ENCODE measurements at regions of chr3 and their contacts with region 1.

Region 1: DNA sequence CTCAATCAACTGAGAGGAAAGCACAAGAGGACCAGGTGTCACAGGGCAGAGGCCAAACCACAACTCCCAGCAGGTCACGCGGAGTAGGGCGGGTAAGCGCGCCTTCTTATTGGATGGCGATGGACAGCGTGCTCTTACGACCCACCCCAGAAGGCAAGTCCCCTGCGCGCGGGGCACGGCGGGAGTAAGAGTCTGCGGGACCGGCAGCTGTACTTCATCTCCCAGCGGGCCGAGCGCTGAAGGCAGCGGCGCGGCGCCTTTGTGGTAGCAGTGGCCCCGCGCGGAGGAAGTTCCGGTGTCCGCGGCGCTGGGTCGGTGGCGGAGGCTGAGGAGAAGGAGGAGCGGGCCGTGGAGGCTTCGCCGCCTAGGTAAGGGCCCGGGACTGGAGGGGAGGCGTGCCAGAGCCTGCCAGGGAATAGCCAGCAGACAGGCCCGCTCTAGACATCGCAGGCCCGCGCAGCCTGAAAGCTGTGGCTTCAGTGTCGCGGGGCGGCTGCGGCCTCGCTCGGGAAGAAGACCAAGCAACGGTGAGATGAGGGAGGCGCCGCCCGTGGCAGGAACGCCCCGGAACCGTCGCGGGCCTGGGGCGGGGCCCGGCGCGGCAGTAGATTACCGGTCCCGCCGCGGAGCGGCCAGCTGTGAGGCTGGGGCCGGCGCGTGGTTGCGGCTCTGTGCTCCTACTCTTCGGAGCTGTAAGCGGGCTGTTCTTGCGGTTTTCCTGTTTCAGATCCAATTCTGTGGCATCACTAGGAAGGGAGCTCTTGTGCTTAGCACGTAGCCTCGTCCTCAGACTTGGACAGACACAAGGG is at the start of gene RBM6:
- DNase-seq: peak; percentile 86 to 98 (median 92)
- ATAC-seq: peak; percentile 97
- H3K4me3 ChIP-seq: peak within 1 kb of the TSS; percentile 88
- H3K4me3 Mint-ChIP-seq: peak within 1 kb of the TSS; percentile 95
- H3K27ac ChIP-seq: peak within 1 kb of the TSS; percentile 96 to 98
- H3K27ac Mint-ChIP-seq: peak within 1 kb of the TSS; percentile 97
- H3K4me1 ChIP-seq: peaks cover 26% of the 10 kb centered on the region
- H3K4me1 Mint-ChIP-seq: peaks cover 34% of the 10 kb centered on the region
- H3K27me3 ChIP-seq: no peaks in the 10 kb centered on the region
- H3K27me3 Mint-ChIP-seq: no peaks in the 10 kb centered on the region
- CTCF ChIP-seq: no peak
- total RNA-seq, gene RBM6: 99.3 to 106 TPM

Region 2: DNA sequence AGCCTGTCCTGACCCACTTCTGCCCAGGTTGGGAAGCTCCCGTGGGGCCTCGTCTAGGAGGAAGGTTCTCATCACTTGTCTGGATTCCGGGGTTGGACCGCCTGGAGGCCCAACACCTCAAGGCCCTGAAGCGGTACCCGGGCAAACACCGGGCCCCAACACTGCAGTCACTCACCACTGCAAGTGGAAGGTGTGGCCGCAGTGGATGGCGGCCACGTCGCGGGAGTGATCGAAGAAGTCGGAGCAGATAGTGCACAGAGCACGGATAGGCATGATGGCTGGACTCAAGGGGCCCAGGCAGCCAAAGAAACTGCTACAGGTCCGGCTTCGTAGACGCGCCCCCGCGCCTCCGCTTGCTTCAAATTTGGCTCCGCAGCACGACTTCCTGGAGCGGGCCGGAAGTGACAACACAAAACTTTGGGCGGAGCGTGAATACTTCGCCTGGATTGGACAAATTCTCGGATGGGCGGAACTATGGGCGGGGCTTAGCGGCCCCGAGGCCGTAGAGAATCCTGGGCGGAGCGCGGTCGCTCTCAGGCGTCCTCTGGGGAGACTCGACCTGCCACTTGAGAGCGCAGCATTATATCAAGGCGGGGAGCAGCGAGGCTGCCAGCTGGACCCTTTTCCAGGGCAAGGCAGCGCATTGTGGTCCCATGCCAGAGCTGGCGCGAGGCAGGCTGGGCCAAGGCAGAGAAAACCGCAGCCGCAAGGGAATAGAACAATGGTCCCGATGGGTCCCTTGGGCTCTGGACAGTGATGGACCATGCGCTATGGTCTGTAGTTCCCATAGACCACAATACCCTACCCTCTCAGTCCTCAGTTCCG is 83.7 kb before region 1 on chr3 and contains the start of gene TRAIP:
- CTCF ChIA-PET with region 1: no interaction called
- POLR2A ChIA-PET with region 1: interaction called, 4 read pairs
- intact Hi-C with region 1: loop called in 1 of 2 experiments (anchors 5 kb)
- DNase-seq: peak; percentile 88 to 98 (median 92)
- ATAC-seq: peak; percentile 98
- H3K4me3 ChIP-seq: peak within 1 kb of the TSS; percentile 59
- H3K4me3 Mint-ChIP-seq: peak within 1 kb of the TSS; percentile 83
- H3K27ac ChIP-seq: peak within 1 kb of the TSS; percentile 42 to 63
- H3K27ac Mint-ChIP-seq: peak within 1 kb of the TSS; percentile 85
- H3K4me1 ChIP-seq: peaks cover 18% of the 10 kb centered on the region
- H3K4me1 Mint-ChIP-seq: peaks cover 7% of the 10 kb centered on the region
- H3K27me3 ChIP-seq: no peaks in the 10 kb centered on the region
- H3K27me3 Mint-ChIP-seq: no peaks in the 10 kb centered on the region
- CTCF ChIP-seq: no peak
- total RNA-seq, gene TRAIP: 2.4 TPM

Region 3: GRCh38 chr3:49906004-49906743 is 33.9 kb before region 1 on chr3:
- CTCF ChIA-PET with region 1: interaction called, 3 read pairs
- POLR2A ChIA-PET with region 1: no interaction called
- intact Hi-C with region 1: loop called in 1 of 2 experiments (anchors 5 kb)
- DNase-seq: peak; percentile 15 to 77 (median 40)
- ATAC-seq: peak; percentile 43
- H3K4me3 ChIP-seq: no peak overlapping the region
- H3K4me3 Mint-ChIP-seq: peak overlapping the region; percentile 75
- H3K27ac ChIP-seq: peak overlapping the region in 1 of 2 donors; percentile 32
- H3K27ac Mint-ChIP-seq: peak overlapping the region; percentile 85
- H3K4me1 ChIP-seq: peaks cover 39% of the 10 kb centered on the region
- H3K4me1 Mint-ChIP-seq: peaks cover 33% of the 10 kb centered on the region
- H3K27me3 ChIP-seq: no peaks in the 10 kb centered on the region
- H3K27me3 Mint-ChIP-seq: no peaks in the 10 kb centered on the region
- CTCF ChIP-seq: peak; percentile 57

Region 4: GRCh38 chr3:49929331-49930240 is 10.5 kb before region 1 on chr3 and contains the start of gene MON1A:
- CTCF ChIA-PET with region 1: interaction called, 8 read pairs
- POLR2A ChIA-PET with region 1: interaction called, 42 read pairs
- intact Hi-C with region 1: loop called in 1 of 2 experiments (anchors 1 kb)
- DNase-seq: peak; percentile 67 to 91 (median 83)
- ATAC-seq: peak; percentile 92
- H3K4me3 ChIP-seq: peak within 1 kb of the TSS; percentile 75
- H3K4me3 Mint-ChIP-seq: peak within 1 kb of the TSS; percentile 85
- H3K27ac ChIP-seq: peak within 1 kb of the TSS; percentile 74 to 78
- H3K27ac Mint-ChIP-seq: peak within 1 kb of the TSS; percentile 86
- H3K4me1 ChIP-seq: peaks cover 20% of the 10 kb centered on the region
- H3K4me1 Mint-ChIP-seq: peaks cover 38% of the 10 kb centered on the region
- H3K27me3 ChIP-seq: no peaks in the 10 kb centered on the region
- H3K27me3 Mint-ChIP-seq: no peaks in the 10 kb centered on the region
- CTCF ChIP-seq: no peak
- total RNA-seq, gene MON1A: 0.85 to 1.3 TPM

Region 5: GRCh38 chr3:50088725-50089608 is 148.9 kb after region 1 on chr3 and contains the start of gene RBM5:
- CTCF ChIA-PET with region 1: no interaction called
- POLR2A ChIA-PET with region 1: no interaction called
- intact Hi-C with region 1: loop called in 1 of 2 experiments (anchors 1 kb)
- DNase-seq: peak; percentile 83 to 95 (median 89)
- ATAC-seq: peak; percentile 99
- H3K4me3 ChIP-seq: peak within 1 kb of the TSS; percentile 73
- H3K4me3 Mint-ChIP-seq: peak within 1 kb of the TSS; percentile 97
- H3K27ac ChIP-seq: peak within 1 kb of the TSS; percentile 88 to 92
- H3K27ac Mint-ChIP-seq: peak within 1 kb of the TSS; percentile 99
- H3K4me1 ChIP-seq: peaks cover 25% of the 10 kb centered on the region
- H3K4me1 Mint-ChIP-seq: peaks cover 37% of the 10 kb centered on the region
- H3K27me3 ChIP-seq: no peaks in the 10 kb centered on the region
- H3K27me3 Mint-ChIP-seq: no peaks in the 10 kb centered on the region
- CTCF ChIP-seq: no peak
- total RNA-seq, gene RBM5: 324 to 330 TPM

Region 6: GRCh38 chr3:50292159-50293078 is 352.4 kb after region 1 on chr3 and contains the start of gene IFRD2:
- CTCF ChIA-PET with region 1: no interaction called
- POLR2A ChIA-PET with region 1: interaction called, 4 read pairs
- intact Hi-C with region 1: loop called in 1 of 2 experiments (anchors 5 kb)
- DNase-seq: peak; percentile 90 to 98 (median 95)
- ATAC-seq: peak; percentile 98
- H3K4me3 ChIP-seq: peak within 1 kb of the TSS; percentile 95
- H3K4me3 Mint-ChIP-seq: peak within 1 kb of the TSS; percentile 95
- H3K27ac ChIP-seq: peak within 1 kb of the TSS; percentile 48 to 60
- H3K27ac Mint-ChIP-seq: peak within 1 kb of the TSS; percentile 93
- H3K4me1 ChIP-seq: peaks cover 25% of the 10 kb centered on the region
- H3K4me1 Mint-ChIP-seq: peaks cover 20% of the 10 kb centered on the region
- H3K27me3 ChIP-seq: no peaks in the 10 kb centered on the region
- H3K27me3 Mint-ChIP-seq: no peaks in the 10 kb centered on the region
- CTCF ChIP-seq: no peak
- total RNA-seq, gene IFRD2: 30.0 to 30.4 TPM

Measured in CD4-positive, alpha-beta T cell (primary cell).